Mammary epithelial cell (primary cell): ENCODE measurements at regions of chr4 and their contacts with region 1.

Region 1: GRCh38 chr4:106201373-106201772 is 114.6 kb downstream of the TBCK start:
- DNase-seq: peak; percentile 8
- H3K4me3 ChIP-seq: no peak overlapping the region
- H3K27ac ChIP-seq: no peak overlapping the region
- H3K4me1 ChIP-seq: no peaks in the 10 kb centered on the region
- H3K27me3 ChIP-seq: no peaks in the 10 kb centered on the region
- CTCF ChIP-seq: peak; percentile 36 to 56

Region 2: GRCh38 chr4:105708530-105709391 is 492.6 kb before region 1 on chr4 and contains the starts of genes GSTCD and INTS12:
- CTCF ChIA-PET with region 1: no interaction called
- dilution Hi-C with region 1: no loop called
- in situ Hi-C with region 1: no loop called
- intact Hi-C with region 1: loop called (anchors 10 kb)
- DNase-seq: peak; percentile 91
- H3K4me3 ChIP-seq: peak within 1 kb of the TSS; percentile 75 to 78 (median 77)
- H3K27ac ChIP-seq: peak within 1 kb of the TSS; percentile 82
- H3K4me1 ChIP-seq: peaks cover 16% of the 10 kb centered on the region
- H3K27me3 ChIP-seq: no peaks in the 10 kb centered on the region
- CTCF ChIP-seq: peak in 1 of 2 donors; percentile 2
- total RNA-seq, gene GSTCD: 20.3 to 22.5 TPM
- total RNA-seq, gene INTS12: 22.2 to 29.8 TPM

Region 3: GRCh38 chr4:106238820-106239420 is 37.5 kb after region 1 on chr4:
- CTCF ChIA-PET with region 1: no interaction called
- dilution Hi-C with region 1: no loop called
- in situ Hi-C with region 1: no loop called
- intact Hi-C with region 1: no loop called
- DNase-seq: peak; percentile 47
- H3K4me3 ChIP-seq: no peak overlapping the region
- H3K27ac ChIP-seq: no peak overlapping the region
- H3K4me1 ChIP-seq: peaks cover 4% of the 10 kb centered on the region
- H3K27me3 ChIP-seq: no peaks in the 10 kb centered on the region
- CTCF ChIP-seq: peak; percentile 50 to 64